Calu3 (cell line): ENCODE measurements at regions of chr18 and their contacts with region 1.

Region 1: DNA sequence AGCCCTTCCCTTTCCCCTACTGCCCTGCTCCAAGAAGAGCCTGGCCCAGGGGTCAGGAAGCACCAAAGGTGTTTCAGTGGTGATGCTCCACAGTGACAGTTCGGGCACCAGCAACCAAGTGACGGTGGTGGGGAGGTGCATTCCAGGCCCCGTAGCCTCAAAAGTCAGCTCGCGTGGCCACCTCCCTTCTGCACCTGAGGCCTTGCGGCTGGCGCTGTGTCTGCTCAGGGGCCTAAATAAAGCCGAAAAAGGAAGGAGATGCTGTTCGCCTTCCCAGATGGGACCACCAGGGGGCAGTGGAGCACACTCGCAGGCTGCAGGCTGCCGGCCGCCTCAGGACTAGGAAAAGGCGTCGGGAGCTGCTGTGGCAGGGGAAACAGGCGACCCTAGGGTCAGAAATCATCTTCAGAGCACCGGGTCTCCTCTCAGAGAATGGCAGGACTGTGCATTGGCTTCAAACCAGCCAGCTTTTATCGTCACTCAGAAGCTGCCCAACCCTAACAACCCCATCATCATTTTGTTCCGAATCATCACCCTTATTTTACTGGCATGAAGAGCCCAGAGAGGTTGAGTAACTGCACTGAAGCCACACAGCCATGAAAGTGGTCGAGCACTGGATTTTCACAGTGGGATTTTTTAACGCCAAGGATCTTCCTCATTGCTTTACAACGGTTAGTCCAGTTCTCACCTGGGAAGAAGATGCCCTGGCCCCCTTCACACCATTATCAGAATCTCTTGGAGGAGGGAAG is 213.0 kb upstream of the CELF4 start:
- DNase-seq: peak; percentile 83
- H3K4me3 Mint-ChIP-seq: no peak overlapping the region
- H3K27ac Mint-ChIP-seq: no peak overlapping the region
- H3K4me1 Mint-ChIP-seq: no peaks in the 10 kb centered on the region
- H3K27me3 Mint-ChIP-seq: peaks cover 25% of the 10 kb centered on the region
- CTCF ChIP-seq: peak; percentile 78

Region 2: GRCh38 chr18:37796823-37797349 is 18.3 kb after region 1 on chr18:
- CTCF ChIA-PET with region 1: no interaction called
- intact Hi-C with region 1: no loop called
- DNase-seq: no peak
- H3K4me3 Mint-ChIP-seq: no peak overlapping the region
- H3K27ac Mint-ChIP-seq: no peak overlapping the region
- H3K4me1 Mint-ChIP-seq: no peaks in the 10 kb centered on the region
- H3K27me3 Mint-ChIP-seq: no peaks in the 10 kb centered on the region
- CTCF ChIP-seq: no peak

Region 3: GRCh38 chr18:37900326-37900725 is 121.7 kb after region 1 on chr18:
- CTCF ChIA-PET with region 1: no interaction called
- intact Hi-C with region 1: no loop called
- DNase-seq: no peak
- H3K4me3 Mint-ChIP-seq: no peak overlapping the region
- H3K27ac Mint-ChIP-seq: no peak overlapping the region
- H3K4me1 Mint-ChIP-seq: no peaks in the 10 kb centered on the region
- H3K27me3 Mint-ChIP-seq: peaks cover 10% of the 10 kb centered on the region
- CTCF ChIP-seq: no peak

Region 4: GRCh38 chr18:38427232-38427631 is 648.6 kb after region 1 on chr18:
- CTCF ChIA-PET with region 1: no interaction called
- intact Hi-C with region 1: loop called (anchors 5 kb)
- DNase-seq: peak; percentile 34
- H3K4me3 Mint-ChIP-seq: no peak overlapping the region
- H3K27ac Mint-ChIP-seq: no peak overlapping the region
- H3K4me1 Mint-ChIP-seq: no peaks in the 10 kb centered on the region
- H3K27me3 Mint-ChIP-seq: peaks cover 12% of the 10 kb centered on the region
- CTCF ChIP-seq: peak; percentile 33